ENCODE measurements at regions of chr3 and their contacts with region 1.

Region 1: GRCh38 chr3:120795017-120795648 is 52.6 kb downstream of the GTF2E1 start:
- DNase-seq: peak; percentile 80
- H3K4me3 ChIP-seq: no peak overlapping the region
- H3K27ac ChIP-seq: no peak overlapping the region
- H3K4me1 ChIP-seq: peaks cover 23% of the 10 kb centered on the region
- H3K27me3 ChIP-seq: no peaks in the 10 kb centered on the region

Region 2: DNA sequence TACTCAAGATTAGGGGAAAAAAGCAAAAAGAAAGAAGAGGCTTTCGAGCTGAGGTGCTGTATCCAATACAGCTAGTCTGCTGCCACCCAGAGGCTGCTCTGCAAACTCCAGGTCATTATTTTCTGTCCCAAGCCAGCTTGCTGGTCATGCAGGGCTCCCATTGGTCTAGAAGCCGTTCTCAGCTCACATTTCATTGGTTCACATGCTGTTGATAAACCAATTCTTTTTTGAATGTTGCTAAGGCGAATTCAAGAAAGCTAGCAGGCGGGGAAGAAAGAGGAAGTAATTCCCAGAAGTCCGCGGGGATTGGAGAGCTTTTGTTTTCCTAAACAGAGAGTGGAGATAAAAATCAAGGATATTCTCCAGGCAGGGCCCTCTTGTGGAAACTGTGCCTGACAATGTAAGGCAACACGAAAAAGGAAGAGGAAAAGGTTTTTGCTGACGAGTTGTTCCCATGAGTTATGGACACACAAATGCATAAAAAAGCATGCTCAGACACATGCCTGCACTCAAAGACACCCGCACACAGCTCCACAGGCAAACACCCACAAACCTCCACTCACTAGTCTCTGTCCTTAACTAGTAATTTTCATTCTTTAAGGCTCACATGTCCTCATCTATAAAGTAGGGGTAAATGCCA is 377.7 kb before region 1 on chr3:
- in situ Hi-C with region 1: loop called (anchors 25 kb)
- DNase-seq: peak; percentile 97
- H3K4me3 ChIP-seq: peak overlapping the region; percentile 9
- H3K27ac ChIP-seq: peak overlapping the region; percentile 89
- H3K4me1 ChIP-seq: peaks cover 56% of the 10 kb centered on the region
- H3K27me3 ChIP-seq: no peaks in the 10 kb centered on the region

Region 3: GRCh38 chr3:120558771-120559241 is 236.3 kb before region 1 on chr3:
- in situ Hi-C with region 1: loop called (anchors 10 kb)
- DNase-seq: peak; percentile 96
- H3K4me3 ChIP-seq: peak overlapping the region; percentile 85
- H3K27ac ChIP-seq: peak overlapping the region; percentile 88
- H3K4me1 ChIP-seq: peaks cover 26% of the 10 kb centered on the region
- H3K27me3 ChIP-seq: no peaks in the 10 kb centered on the region

Region 4: GRCh38 chr3:120596116-120596852 is 198.8 kb before region 1 on chr3 and contains the start of gene NDUFB4:
- in situ Hi-C with region 1: loop called (anchors 10 kb)
- DNase-seq: peak; percentile 99
- H3K4me3 ChIP-seq: peak within 1 kb of the TSS; percentile 87
- H3K27ac ChIP-seq: peak within 1 kb of the TSS; percentile 76
- H3K4me1 ChIP-seq: no peaks in the 10 kb centered on the region
- H3K27me3 ChIP-seq: no peaks in the 10 kb centered on the region
- total RNA-seq, gene NDUFB4: 32.9 and 105 TPM in 2 replicates